Naive thymus-derived CD4-positive, alpha-beta T cell (primary cell): ENCODE measurements at regions of chr1 and their contacts with region 1.

Region 1: GRCh38 chr1:36411674-36412520 is 14.2 kb upstream of the LSM10 start:
- DNase-seq: peak in 8 of 9 donors; percentile 14 to 71 (median 40)
- ATAC-seq: peak; percentile 77
- H3K4me3 ChIP-seq: no peak overlapping the region
- H3K4me3 Mint-ChIP-seq: peak overlapping the region in 7 of 10 donors; percentile 5 to 49 (median 40)
- H3K27ac ChIP-seq: no peak overlapping the region
- H3K27ac Mint-ChIP-seq: peak overlapping the region; percentile 22 to 93 (median 84)
- H3K4me1 ChIP-seq: peaks cover 0 to 4% of the 10 kb centered on the region in 2 donors
- H3K4me1 Mint-ChIP-seq: peaks cover 0 to 19% (median 15%) of the 10 kb centered on the region in 7 donors
- H3K27me3 ChIP-seq: no peaks in the 10 kb centered on the region
- H3K27me3 Mint-ChIP-seq: no peaks in the 10 kb centered on the region

Region 2: DNA sequence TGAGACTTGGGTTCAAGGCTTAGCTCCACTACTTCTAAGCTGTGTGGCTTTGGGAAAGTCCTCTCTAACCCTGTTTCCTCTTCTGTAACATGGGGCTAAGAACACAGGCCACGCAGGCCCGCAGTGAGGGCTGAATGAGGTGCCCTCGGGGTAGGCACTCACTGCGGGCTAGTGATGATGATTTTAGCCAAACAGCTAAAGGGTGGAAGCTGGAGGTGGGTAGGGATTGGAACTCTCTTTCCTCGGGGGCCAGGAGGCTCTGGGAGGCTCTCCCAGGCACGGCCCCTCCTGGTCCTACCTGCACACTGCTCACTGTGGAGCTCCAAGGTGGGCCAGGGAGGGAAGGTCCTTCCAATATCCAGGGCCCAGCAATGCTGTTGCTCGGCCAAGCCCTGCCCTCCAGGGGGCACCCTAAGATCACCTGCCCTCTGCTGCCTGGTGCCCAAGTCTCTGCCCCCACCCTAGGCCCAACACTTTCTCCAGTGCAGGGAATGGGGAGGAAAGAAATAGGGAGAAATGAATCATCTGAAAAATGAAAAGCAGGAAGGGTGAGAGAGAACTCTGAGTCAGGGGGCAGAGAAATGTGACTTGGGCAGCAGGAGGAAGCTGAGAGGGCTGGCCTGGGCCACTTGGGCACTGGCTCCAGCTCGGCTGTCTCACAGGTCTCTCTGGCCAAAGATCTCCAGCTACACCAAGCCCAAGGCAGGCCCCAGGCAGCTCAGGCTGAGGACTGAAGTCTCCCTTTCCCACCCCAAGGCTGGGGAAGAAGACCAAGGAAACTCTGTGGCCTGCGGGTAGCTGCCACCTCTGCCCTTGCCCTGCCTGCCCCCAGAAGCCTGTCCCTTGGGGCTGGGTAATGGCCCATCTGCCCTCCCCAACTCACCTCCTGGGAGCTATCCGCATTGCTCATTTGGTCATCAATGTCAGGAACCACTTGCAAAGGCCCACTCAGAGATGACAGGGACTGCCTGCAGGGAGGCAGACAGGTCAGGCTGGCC is 69.1 kb before region 1 on chr1:
- CTCF ChIA-PET with region 1: interaction called, 11 read pairs
- POLR2A ChIA-PET with region 1: interaction called, 3 read pairs
- intact Hi-C with region 1: no loop called
- DNase-seq: peak; percentile 47 to 72 (median 58)
- ATAC-seq: peak; percentile 86
- H3K4me3 ChIP-seq: no peak overlapping the region
- H3K4me3 Mint-ChIP-seq: no peak overlapping the region
- H3K27ac ChIP-seq: no peak overlapping the region
- H3K27ac Mint-ChIP-seq: peak overlapping the region in 6 of 9 donors; percentile 32 to 86 (median 71)
- H3K4me1 ChIP-seq: peaks cover 0 to 8% of the 10 kb centered on the region in 2 donors
- H3K4me1 Mint-ChIP-seq: peaks cover 6 to 40% (median 28%) of the 10 kb centered on the region in 7 donors
- H3K27me3 ChIP-seq: no peaks in the 10 kb centered on the region
- H3K27me3 Mint-ChIP-seq: no peaks in the 10 kb centered on the region

Region 3: DNA sequence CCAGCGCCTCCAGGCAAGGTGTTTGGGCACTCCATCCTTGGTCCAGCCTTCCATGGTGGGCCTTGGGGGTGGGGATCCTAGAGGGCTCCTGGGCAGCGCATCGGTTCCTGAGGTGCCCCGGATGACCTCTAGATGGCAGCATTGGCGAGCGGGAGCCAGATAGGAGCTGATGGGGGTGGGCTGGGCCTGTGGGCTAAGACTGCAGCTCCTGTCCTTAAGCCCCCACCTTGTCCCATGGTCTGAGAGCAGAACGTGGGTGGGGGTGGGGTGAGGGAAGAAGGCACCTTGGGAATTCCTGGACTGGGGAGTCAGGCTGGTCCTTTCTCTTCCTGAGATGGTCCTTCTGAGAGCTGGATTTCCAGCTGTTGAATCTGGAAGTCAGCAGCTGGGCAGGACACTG is 164.2 kb after region 1 on chr1:
- CTCF ChIA-PET with region 1: no interaction called
- POLR2A ChIA-PET with region 1: no interaction called
- intact Hi-C with region 1: no loop called
- DNase-seq: peak in 8 of 9 donors; percentile 12 to 46 (median 30)
- ATAC-seq: peak; percentile 42
- H3K4me3 ChIP-seq: no peak overlapping the region
- H3K4me3 Mint-ChIP-seq: no peak overlapping the region
- H3K27ac ChIP-seq: no peak overlapping the region
- H3K27ac Mint-ChIP-seq: no peak overlapping the region
- H3K4me1 ChIP-seq: no peaks in the 10 kb centered on the region
- H3K4me1 Mint-ChIP-seq: peaks cover 0 to 5% (median 0%) of the 10 kb centered on the region in 7 donors
- H3K27me3 ChIP-seq: no peaks in the 10 kb centered on the region
- H3K27me3 Mint-ChIP-seq: peaks cover 23 to 36% (median 27%) of the 10 kb centered on the region in 5 donors